MCF 10A (cell line): ENCODE measurements at regions of chr12 and their contacts with region 1.

Region 1: GRCh38 chr12:69553627-69554248 is 31.5 kb upstream of the CCT2 start:
- DNase-seq: peak; percentile 80
- H3K4me3 Mint-ChIP-seq: no peak overlapping the region
- H3K27ac Mint-ChIP-seq: peak overlapping the region; percentile 43
- H3K4me1 Mint-ChIP-seq: peaks cover 38% of the 10 kb centered on the region
- H3K27me3 Mint-ChIP-seq: no peaks in the 10 kb centered on the region
- CTCF ChIP-seq: no peak

Region 2: GRCh38 chr12:69007101-69007854 is 546.5 kb before region 1 on chr12:
- CTCF ChIA-PET with region 1: no interaction called
- POLR2A ChIA-PET with region 1: no interaction called
- intact Hi-C with region 1: no loop called
- DNase-seq: peak; percentile 53
- H3K4me3 Mint-ChIP-seq: peak overlapping the region; percentile 39
- H3K27ac Mint-ChIP-seq: peak overlapping the region; percentile 82
- H3K4me1 Mint-ChIP-seq: peaks cover 24% of the 10 kb centered on the region
- H3K27me3 Mint-ChIP-seq: no peaks in the 10 kb centered on the region
- CTCF ChIP-seq: no peak

Region 3: GRCh38 chr12:69527506-69528272 is 26.0 kb before region 1 on chr12:
- CTCF ChIA-PET with region 1: no interaction called
- POLR2A ChIA-PET with region 1: interaction called, 11 read pairs
- intact Hi-C with region 1: no loop called
- DNase-seq: peak; percentile 51
- H3K4me3 Mint-ChIP-seq: no peak overlapping the region
- H3K27ac Mint-ChIP-seq: peak overlapping the region; percentile 4
- H3K4me1 Mint-ChIP-seq: peaks cover 20% of the 10 kb centered on the region
- H3K27me3 Mint-ChIP-seq: no peaks in the 10 kb centered on the region
- CTCF ChIP-seq: no peak

Region 4: DNA sequence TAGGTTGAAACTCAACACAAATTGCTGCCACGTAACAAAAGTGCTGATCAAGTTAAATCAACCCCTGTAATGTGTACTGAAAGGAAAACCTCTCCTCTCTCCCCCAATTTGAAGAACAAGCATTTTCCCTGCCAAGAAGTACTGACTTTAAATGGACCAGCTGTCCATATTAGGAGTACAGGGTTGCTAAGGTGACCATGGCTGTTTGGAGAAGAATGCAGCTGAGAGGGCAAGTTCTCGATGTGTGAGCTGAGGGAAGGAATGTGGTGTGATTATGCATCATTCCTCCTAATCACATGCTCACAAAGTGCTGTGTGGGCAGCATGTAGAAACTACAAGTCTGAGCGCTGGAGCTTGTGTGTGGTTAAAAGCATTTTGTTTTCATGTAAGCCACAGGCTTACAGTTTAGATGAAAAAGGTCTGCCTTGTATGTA is 19.3 kb before region 1 on chr12:
- CTCF ChIA-PET with region 1: interaction called, 3 read pairs
- POLR2A ChIA-PET with region 1: interaction called, 11 read pairs
- intact Hi-C with region 1: no loop called
- DNase-seq: peak; percentile 75
- H3K4me3 Mint-ChIP-seq: peak overlapping the region; percentile 22
- H3K27ac Mint-ChIP-seq: peak overlapping the region; percentile 95
- H3K4me1 Mint-ChIP-seq: peaks cover 18% of the 10 kb centered on the region
- H3K27me3 Mint-ChIP-seq: no peaks in the 10 kb centered on the region
- CTCF ChIP-seq: no peak

Region 5: DNA sequence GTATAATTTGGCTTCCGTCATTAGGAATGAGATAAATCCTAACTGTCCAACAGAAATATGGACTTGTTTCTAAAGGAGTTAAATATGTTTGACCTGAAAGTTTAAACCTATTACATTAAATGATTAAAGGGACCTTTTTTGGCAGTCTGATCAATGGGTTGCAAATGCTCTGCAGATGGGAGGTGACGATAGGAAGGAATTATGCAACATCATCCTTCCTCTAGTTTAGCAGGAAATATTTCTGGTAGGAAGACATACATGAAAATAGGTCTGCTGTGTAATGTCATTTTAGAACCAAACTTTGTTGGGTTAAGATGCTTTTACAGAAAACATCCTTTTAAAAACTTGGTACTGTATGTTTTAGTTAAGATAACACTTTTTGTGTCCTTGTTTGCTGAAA is 54.4 kb after region 1 on chr12:
- CTCF ChIA-PET with region 1: no interaction called
- POLR2A ChIA-PET with region 1: no interaction called
- intact Hi-C with region 1: no loop called
- DNase-seq: no peak
- H3K4me3 Mint-ChIP-seq: no peak overlapping the region
- H3K27ac Mint-ChIP-seq: no peak overlapping the region
- H3K4me1 Mint-ChIP-seq: no peaks in the 10 kb centered on the region
- H3K27me3 Mint-ChIP-seq: no peaks in the 10 kb centered on the region
- CTCF ChIP-seq: no peak